ENCODE measurements at regions of chr1 and their contacts with region 1.

Region 1: DNA sequence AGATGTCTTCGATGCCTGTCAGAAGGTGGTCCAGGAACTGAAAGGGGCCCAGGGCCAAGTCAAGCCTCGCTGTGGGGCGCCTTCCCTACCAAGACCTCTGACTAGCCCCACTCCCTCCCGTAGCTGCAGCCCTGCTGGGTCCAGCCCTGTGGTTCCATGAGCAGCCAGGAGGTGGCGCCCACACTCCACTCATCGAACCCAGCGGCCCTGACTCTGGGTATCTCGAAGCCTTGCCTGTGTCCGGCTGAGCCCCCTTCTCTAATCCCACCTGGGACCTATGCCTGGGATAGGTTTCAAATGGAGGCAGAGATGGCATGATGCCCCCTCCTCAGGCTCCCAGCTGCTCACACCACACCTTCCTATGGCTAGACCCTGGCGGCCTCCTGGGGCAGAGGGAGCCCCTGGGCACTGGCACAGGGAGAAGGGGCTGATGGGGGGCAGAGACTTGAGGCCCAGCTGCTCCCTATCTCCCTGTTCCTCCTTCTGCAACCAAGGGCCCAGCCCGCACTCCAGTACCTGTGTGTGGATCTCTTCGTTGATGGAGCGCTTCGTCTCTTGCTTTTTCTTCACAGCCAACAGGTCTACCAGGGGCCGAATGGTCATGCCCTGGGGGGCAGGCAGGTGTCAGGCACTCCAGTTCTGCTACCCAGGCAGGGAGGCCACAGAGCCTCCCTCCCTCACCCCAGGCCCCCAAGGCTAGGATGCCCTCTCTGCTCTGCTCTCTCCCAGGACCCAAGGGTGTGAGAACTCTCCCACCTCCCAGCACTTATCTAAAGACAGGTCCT is 52.0 kb downstream of the SLC9A1 start:
- DNase-seq: peak; percentile 54 to 87 (median 76)
- ATAC-seq: peak; percentile 75
- H3K4me3 ChIP-seq: no peak overlapping the region
- H3K4me3 Mint-ChIP-seq: no peak overlapping the region
- H3K27ac ChIP-seq: no peak overlapping the region
- H3K27ac Mint-ChIP-seq: peak overlapping the region in 2 of 9 donors; percentile 45 to 57
- H3K4me1 ChIP-seq: no peaks in the 10 kb centered on the region
- H3K4me1 Mint-ChIP-seq: peaks cover 0 to 21% (median 3%) of the 10 kb centered on the region in 7 donors
- H3K27me3 ChIP-seq: no peaks in the 10 kb centered on the region
- H3K27me3 Mint-ChIP-seq: no peaks in the 10 kb centered on the region

Region 2: DNA sequence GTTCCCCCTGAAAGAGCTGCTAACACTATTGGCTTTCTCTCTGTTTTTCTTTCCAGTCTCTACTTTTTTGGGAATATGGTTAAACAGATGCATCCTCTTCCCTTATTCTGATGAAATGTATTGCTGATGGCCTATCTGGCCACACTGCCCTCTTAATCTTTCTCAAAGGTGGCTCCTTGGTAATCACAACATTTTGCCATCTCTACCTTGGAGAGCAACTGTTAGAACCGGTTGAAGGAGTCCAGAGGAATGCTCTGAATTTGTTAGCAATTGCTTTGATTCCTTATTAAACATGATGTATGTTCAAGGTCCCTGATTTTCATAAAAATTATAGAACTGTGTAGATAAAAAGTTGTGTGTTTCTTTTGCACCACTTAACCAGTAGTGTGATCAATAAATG is 457.2 kb before region 1 on chr1:
- CTCF ChIA-PET with region 1: no interaction called
- POLR2A ChIA-PET with region 1: no interaction called
- intact Hi-C with region 1: no loop called
- DNase-seq: no peak
- ATAC-seq: no peak
- H3K4me3 ChIP-seq: no peak overlapping the region
- H3K4me3 Mint-ChIP-seq: no peak overlapping the region
- H3K27ac ChIP-seq: no peak overlapping the region
- H3K27ac Mint-ChIP-seq: peak overlapping the region in 1 of 9 donors; percentile 47
- H3K4me1 ChIP-seq: no peaks in the 10 kb centered on the region
- H3K4me1 Mint-ChIP-seq: peaks cover 0 to 1% (median 0%) of the 10 kb centered on the region in 7 donors
- H3K27me3 ChIP-seq: no peaks in the 10 kb centered on the region
- H3K27me3 Mint-ChIP-seq: peaks cover 0 to 5% (median 0%) of the 10 kb centered on the region in 5 donors

Region 3: DNA sequence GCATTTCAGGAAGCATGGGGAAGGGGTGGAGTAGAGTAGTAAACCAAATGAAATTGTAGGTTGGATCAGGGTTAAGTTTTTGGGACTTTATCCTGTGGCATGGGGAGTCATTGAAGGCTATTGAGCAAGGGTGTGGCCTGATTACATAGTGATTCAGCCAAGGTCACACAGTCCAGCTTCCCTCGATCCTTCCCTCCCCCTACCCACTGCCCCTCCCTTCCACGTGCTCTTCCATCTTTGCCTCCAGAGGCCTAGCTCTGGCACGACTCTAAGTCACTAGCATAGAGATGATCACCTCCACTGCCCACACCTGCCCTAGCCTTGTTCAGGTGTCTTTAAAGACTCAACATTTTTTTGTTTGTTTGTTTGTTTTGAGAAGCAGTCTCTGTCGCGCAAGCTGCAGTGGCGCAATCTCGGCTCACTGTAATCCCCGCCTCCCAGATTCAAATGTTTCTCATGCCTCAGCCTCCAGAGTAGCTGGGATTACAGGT is 89.2 kb after region 1 on chr1:
- CTCF ChIA-PET with region 1: interaction called, 17 read pairs
- POLR2A ChIA-PET with region 1: no interaction called
- intact Hi-C with region 1: no loop called
- DNase-seq: no peak
- ATAC-seq: peak; percentile 61
- H3K4me3 ChIP-seq: no peak overlapping the region
- H3K4me3 Mint-ChIP-seq: peak overlapping the region in 1 of 10 donors; percentile 29
- H3K27ac ChIP-seq: no peak overlapping the region
- H3K27ac Mint-ChIP-seq: no peak overlapping the region
- H3K4me1 ChIP-seq: no peaks in the 10 kb centered on the region
- H3K4me1 Mint-ChIP-seq: no peaks in the 10 kb centered on the region
- H3K27me3 ChIP-seq: no peaks in the 10 kb centered on the region
- H3K27me3 Mint-ChIP-seq: peaks cover 0 to 9% (median 0%) of the 10 kb centered on the region in 5 donors

Region 4: GRCh38 chr1:27284425-27285273 is 181.8 kb after region 1 on chr1:
- CTCF ChIA-PET with region 1: interaction called, 90 read pairs
- POLR2A ChIA-PET with region 1: no interaction called
- intact Hi-C with region 1: loop called (anchors 1 kb)
- DNase-seq: peak; percentile 70 to 88 (median 85)
- ATAC-seq: peak; percentile 96
- H3K4me3 ChIP-seq: no peak overlapping the region
- H3K4me3 Mint-ChIP-seq: no peak overlapping the region
- H3K27ac ChIP-seq: no peak overlapping the region
- H3K27ac Mint-ChIP-seq: peak overlapping the region in 5 of 9 donors; percentile 14 to 72 (median 57)
- H3K4me1 ChIP-seq: no peaks in the 10 kb centered on the region
- H3K4me1 Mint-ChIP-seq: peaks cover 0 to 12% (median 3%) of the 10 kb centered on the region in 7 donors
- H3K27me3 ChIP-seq: no peaks in the 10 kb centered on the region
- H3K27me3 Mint-ChIP-seq: no peaks in the 10 kb centered on the region

Region 5: GRCh38 chr1:27556781-27557595 is 454.1 kb after region 1 on chr1:
- CTCF ChIA-PET with region 1: no interaction called
- POLR2A ChIA-PET with region 1: no interaction called
- intact Hi-C with region 1: no loop called
- DNase-seq: peak; percentile 51 to 79 (median 65)
- ATAC-seq: peak; percentile 87
- H3K4me3 ChIP-seq: no peak overlapping the region
- H3K4me3 Mint-ChIP-seq: peak overlapping the region; percentile 14 to 88 (median 67)
- H3K27ac ChIP-seq: no peak overlapping the region
- H3K27ac Mint-ChIP-seq: peak overlapping the region; percentile 32 to 98 (median 81)
- H3K4me1 ChIP-seq: peaks cover 8 to 16% of the 10 kb centered on the region in 2 donors
- H3K4me1 Mint-ChIP-seq: peaks cover 23 to 56% (median 46%) of the 10 kb centered on the region in 7 donors
- H3K27me3 ChIP-seq: no peaks in the 10 kb centered on the region
- H3K27me3 Mint-ChIP-seq: no peaks in the 10 kb centered on the region

Region 6: DNA sequence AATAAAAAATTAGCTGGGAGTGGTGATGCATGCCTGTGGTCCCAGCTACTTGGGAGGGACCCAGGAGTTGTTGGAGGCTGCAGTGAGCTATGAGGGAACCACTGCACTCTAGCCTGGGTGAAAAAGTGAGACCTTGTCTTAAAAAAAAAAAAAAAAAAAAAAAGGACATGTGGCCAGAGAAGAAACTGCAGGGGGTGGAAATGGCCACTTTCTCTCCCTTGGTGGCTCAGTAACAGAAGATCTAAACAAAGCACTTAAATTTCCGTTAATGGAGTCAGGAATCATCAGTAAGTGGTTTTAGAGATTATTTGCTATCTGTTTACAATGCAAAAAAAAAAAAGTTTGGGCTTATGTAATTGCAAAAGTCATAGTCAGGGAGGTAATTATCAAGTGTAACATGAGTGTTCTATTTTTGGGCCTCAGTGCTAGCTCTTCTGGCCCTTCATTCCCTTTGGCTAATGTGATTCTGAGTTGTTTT is 1689.8 kb after region 1 on chr1:
- CTCF ChIA-PET with region 1: no interaction called
- POLR2A ChIA-PET with region 1: no interaction called
- intact Hi-C with region 1: no loop called
- DNase-seq: no peak
- ATAC-seq: no peak
- H3K4me3 ChIP-seq: no peak overlapping the region
- H3K4me3 Mint-ChIP-seq: no peak overlapping the region
- H3K27ac ChIP-seq: no peak overlapping the region
- H3K27ac Mint-ChIP-seq: no peak overlapping the region
- H3K4me1 ChIP-seq: no peaks in the 10 kb centered on the region
- H3K4me1 Mint-ChIP-seq: peaks cover 0 to 5% (median 0%) of the 10 kb centered on the region in 7 donors
- H3K27me3 ChIP-seq: no peaks in the 10 kb centered on the region
- H3K27me3 Mint-ChIP-seq: peaks cover 0 to 39% (median 0%) of the 10 kb centered on the region in 5 donors

Measured in naive thymus-derived CD4-positive, alpha-beta T cell (primary cell).